ENCODE measurements at regions of chr4 and their contacts with region 1.

Region 1: DNA sequence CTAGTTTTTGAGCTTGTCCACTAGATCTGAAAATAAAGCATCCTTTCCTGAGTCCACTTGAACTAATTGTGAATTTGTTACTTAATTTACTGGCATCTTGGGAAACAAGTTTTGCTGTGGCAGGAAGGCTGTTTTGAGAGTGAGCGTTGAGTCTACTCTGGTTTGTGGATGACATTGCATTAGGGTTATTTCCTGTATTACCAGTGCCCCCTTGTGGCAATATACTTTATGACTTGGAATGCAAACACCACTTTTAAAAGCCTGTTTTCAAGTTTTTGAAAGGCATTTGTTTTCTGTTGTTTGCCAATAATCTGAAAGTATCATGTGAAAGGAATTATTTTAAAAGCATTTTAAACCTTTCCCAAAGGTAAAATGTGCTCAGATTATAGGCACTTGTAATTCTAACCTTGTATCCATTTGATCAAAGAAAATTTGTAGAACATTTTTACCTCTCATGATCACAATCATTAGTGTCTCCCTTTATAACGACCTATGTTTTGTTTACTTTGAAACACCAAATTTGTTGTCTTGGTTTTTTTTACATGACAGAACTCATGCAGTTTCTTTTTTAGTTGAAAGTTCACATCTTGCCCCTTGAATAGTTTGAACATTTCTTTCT is 18.0 kb upstream of the CYP2U1 start:
- DNase-seq: no peak
- ATAC-seq: peak; percentile 71
- H3K4me3 Mint-ChIP-seq: no peak overlapping the region
- H3K27ac Mint-ChIP-seq: no peak overlapping the region
- H3K4me1 Mint-ChIP-seq: peaks cover 2% of the 10 kb centered on the region
- H3K27me3 Mint-ChIP-seq: peaks cover 24% of the 10 kb centered on the region

Region 2: GRCh38 chr4:107531927-107532326 is 381.5 kb before region 1 on chr4:
- CTCF ChIA-PET with region 1: no interaction called
- DNase-seq: no peak
- ATAC-seq: no peak
- H3K4me3 Mint-ChIP-seq: no peak overlapping the region
- H3K27ac Mint-ChIP-seq: no peak overlapping the region
- H3K4me1 Mint-ChIP-seq: no peaks in the 10 kb centered on the region
- H3K27me3 Mint-ChIP-seq: peaks cover 2% of the 10 kb centered on the region

Region 3: DNA sequence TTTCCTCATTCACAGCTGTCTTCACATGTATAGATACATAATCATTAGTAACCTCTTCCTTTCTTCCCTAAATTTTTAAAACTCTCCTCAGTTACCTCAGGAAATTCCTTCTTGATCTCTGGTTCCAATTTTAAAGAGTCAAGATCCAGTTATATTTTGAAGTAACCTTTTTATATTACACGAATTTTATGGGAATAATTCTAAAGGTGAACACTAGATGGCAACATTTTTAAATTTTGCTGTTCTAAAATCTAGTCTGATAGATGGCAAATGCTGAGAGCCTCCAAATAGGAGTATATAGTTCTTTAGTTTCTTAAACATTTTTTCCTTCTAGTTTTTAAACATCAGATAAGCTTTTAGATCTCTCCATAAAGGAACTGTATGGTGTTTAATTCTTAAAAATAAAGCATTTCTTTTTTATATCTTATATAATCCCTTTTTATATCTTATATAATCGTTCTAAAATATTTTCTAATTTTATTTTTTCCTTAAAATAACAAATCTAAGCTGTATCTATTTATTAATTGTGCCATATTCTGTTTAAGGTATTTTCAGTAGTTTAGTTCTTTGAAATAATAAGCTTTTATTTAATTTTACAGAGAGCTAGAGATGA is 155.4 kb before region 1 on chr4:
- CTCF ChIA-PET with region 1: interaction called, 24 read pairs
- DNase-seq: no peak
- ATAC-seq: no peak
- H3K4me3 Mint-ChIP-seq: no peak overlapping the region
- H3K27ac Mint-ChIP-seq: no peak overlapping the region
- H3K4me1 Mint-ChIP-seq: no peaks in the 10 kb centered on the region
- H3K27me3 Mint-ChIP-seq: peaks cover 14% of the 10 kb centered on the region

Region 4: DNA sequence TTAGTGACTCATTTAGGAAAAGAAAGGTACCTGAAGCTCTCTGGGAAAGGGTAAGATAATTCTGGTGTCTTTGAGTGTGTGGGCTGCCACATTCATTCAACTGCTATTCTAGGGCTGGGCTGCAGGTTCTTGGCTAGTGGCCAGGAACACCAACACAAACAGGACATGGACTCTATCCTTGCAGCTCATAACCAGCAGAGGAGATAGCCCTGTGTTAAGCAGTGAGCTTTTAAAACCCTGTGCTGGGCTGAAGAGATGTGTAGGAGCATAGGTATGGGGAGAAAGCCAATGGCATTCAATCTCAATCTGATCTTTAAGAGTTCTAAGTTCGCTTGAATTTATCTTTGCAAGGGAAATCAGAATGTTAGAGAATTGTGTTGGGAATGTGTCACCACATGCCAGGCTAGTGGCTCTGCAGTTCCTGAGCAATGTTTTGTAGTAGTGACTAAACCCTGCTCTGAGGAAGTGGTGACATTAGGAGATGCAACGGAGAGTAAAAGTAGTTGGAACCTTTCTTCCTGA is 49.5 kb before region 1 on chr4:
- CTCF ChIA-PET with region 1: no interaction called
- DNase-seq: no peak
- ATAC-seq: no peak
- H3K4me3 Mint-ChIP-seq: no peak overlapping the region
- H3K27ac Mint-ChIP-seq: no peak overlapping the region
- H3K4me1 Mint-ChIP-seq: peaks cover 9% of the 10 kb centered on the region
- H3K27me3 Mint-ChIP-seq: peaks cover 24% of the 10 kb centered on the region